Motor neuron (in vitro differentiated cells): ENCODE measurements at regions of chr20 and their contacts with region 1.

Region 1: GRCh38 chr20:49132995-49133478 is 55.1 kb downstream of the STAU1 start:
- ATAC-seq: peak in 6 of 8 experiments; percentile 38 to 90 (median 74)
- H3K4me3 ChIP-seq: no peak overlapping the region
- H3K27ac ChIP-seq: no peak overlapping the region
- H3K4me1 ChIP-seq: peaks cover 0 to 3% of the 10 kb centered on the region in 2 donors

Region 2: DNA sequence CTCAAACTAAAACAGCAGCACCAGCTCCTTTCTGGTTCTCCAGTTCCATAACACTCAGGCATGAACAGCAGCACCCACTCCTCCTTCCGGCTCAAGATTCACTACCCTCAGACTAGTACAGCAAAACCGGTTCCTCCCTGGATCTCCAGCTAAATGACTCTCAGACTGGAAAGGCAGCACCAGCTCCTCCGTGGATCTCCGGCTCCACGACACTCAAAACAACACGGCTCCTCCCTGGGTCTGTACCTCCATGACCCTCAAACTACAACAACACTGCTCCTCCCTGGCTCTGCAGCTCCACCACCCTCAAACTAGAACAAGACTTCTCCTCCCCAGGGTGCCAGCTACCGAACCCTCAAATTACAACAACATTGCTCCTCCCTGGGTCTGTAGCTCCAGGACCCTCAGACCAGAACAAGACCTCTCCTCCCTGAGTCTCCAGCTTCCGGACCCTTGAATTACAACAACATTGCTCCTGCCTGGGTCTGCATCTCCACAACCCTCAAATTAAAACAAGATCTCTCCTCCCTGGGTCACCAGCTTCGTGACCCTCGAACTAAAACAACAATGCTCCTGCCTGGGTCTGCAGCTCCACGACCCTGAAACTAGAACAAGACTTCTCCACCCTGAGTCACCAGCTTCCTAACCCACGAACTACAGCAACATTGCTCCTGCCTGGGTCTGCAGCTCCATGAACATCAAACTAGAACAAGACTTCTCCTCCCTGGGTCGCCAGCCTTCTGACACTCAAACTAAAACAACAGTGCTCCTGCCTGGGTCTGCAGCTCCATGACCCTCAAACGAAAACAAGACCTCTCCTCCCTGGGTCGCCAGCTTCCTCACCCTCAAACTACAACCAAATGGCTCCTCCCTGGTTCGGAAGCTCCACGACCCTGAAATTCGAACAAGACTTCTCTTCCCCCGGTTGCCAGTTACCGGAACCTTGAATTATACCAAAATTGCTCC is 629.9 kb before region 1 on chr20:
- in situ Hi-C with region 1: no loop called
- ATAC-seq: no peak
- H3K4me3 ChIP-seq: no peak overlapping the region
- H3K27ac ChIP-seq: no peak overlapping the region
- H3K4me1 ChIP-seq: peaks cover 6 to 11% of the 10 kb centered on the region in 2 donors

Region 3: GRCh38 chr20:49207076-49207475 is 74.0 kb after region 1 on chr20:
- in situ Hi-C with region 1: loop called in 2 of 9 experiments (anchors 5 to 10 kb)
- ATAC-seq: no peak
- H3K4me3 ChIP-seq: no peak overlapping the region
- H3K27ac ChIP-seq: no peak overlapping the region
- H3K4me1 ChIP-seq: no peaks in the 10 kb centered on the region

Region 4: GRCh38 chr20:49219089-49219923 is 86.3 kb after region 1 on chr20 and contains the start of gene DDX27:
- in situ Hi-C with region 1: loop called in 1 of 9 experiments (anchors 10 kb)
- ATAC-seq: peak; percentile 94 to 98 (median 95)
- H3K4me3 ChIP-seq: peak within 1 kb of the TSS; percentile 60 to 94 (median 64)
- H3K27ac ChIP-seq: peak within 1 kb of the TSS; percentile 67 to 78
- H3K4me1 ChIP-seq: peaks cover 9 to 10% of the 10 kb centered on the region in 2 donors
- total RNA-seq, gene DDX27: 15.2 to 49.1 (median 23.8) TPM